Heart right ventricle (tissue), 16 donors: ENCODE measurements at regions of chr7 and their contacts with region 1.

Region 1: GRCh38 chr7:94810496-94810895 is 96.9 kb upstream of the PPP1R9A start:
- DNase-seq: no peak
- ATAC-seq: no peak
- H3K4me3 ChIP-seq: no peak overlapping the region
- H3K27ac ChIP-seq: no peak overlapping the region
- H3K4me1 ChIP-seq: no peaks in the 10 kb centered on the region
- H3K27me3 ChIP-seq: no peaks in the 10 kb centered on the region
- CTCF ChIP-seq: no peak

Region 2: DNA sequence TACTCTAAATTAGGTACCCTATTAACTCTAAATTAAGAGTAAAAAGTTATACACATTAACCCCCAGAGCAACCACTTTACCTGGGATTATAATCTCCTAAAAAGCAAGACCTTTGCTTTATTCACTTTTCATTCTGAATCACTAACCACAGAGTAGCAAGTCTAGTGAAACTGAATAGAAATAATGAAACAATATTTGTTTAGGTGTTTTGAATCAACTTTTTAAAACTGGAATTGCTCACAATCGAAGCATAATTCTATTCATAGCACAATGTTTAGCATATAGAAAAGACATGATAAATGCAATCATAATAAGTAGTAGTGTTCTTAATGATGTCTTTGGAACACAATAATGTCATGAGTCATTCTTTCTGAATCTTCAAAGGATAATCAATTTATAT is 337.9 kb before region 1 on chr7:
- intact Hi-C with region 1: loop called in 1 of 10 experiments (anchors 10 kb)
- DNase-seq: no peak
- ATAC-seq: no peak
- H3K4me3 ChIP-seq: no peak overlapping the region
- H3K27ac ChIP-seq: no peak overlapping the region
- H3K4me1 ChIP-seq: no peaks in the 10 kb centered on the region
- H3K27me3 ChIP-seq: peaks cover 0 to 4% (median 0%) of the 10 kb centered on the region in 7 donors
- CTCF ChIP-seq: no peak

Region 3: GRCh38 chr7:94761451-94761850 is 49.0 kb before region 1 on chr7:
- intact Hi-C with region 1: loop called in 1 of 10 experiments (anchors 1 kb)
- DNase-seq: no peak
- ATAC-seq: no peak
- H3K4me3 ChIP-seq: no peak overlapping the region
- H3K27ac ChIP-seq: no peak overlapping the region
- H3K4me1 ChIP-seq: no peaks in the 10 kb centered on the region
- H3K27me3 ChIP-seq: no peaks in the 10 kb centered on the region
- CTCF ChIP-seq: no peak

Region 4: DNA sequence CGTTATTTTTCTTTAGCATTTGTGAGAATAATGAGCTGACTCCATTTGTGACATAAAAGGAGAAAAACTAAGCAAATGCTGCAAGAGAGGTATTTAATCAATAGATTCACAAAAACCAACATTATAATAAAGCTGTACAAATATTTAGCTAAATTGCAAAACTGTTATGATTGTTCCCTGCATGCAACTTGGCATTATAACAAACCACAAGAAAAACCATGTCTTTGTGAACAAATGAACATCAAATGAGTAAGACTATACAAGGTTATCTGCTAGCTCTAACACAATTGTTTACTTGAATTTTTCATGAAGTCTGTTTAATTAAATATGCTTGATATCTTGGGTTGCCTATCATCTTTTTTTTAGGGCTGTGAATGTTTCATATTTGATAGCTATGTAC is 46.1 kb after region 1 on chr7:
- intact Hi-C with region 1: no loop called
- DNase-seq: no peak
- ATAC-seq: no peak
- H3K4me3 ChIP-seq: no peak overlapping the region
- H3K27ac ChIP-seq: no peak overlapping the region
- H3K4me1 ChIP-seq: no peaks in the 10 kb centered on the region
- H3K27me3 ChIP-seq: no peaks in the 10 kb centered on the region
- CTCF ChIP-seq: no peak

Region 5: GRCh38 chr7:94907026-94907810 is 96.7 kb after region 1 on chr7 and contains the start of gene PPP1R9A:
- intact Hi-C with region 1: no loop called
- DNase-seq: peak; percentile 37 to 45
- ATAC-seq: peak; percentile 63 to 91 (median 84)
- H3K4me3 ChIP-seq: peak within 1 kb of the TSS; percentile 11 to 70 (median 60)
- H3K27ac ChIP-seq: peak within 1 kb of the TSS; percentile 26 to 83 (median 72)
- H3K4me1 ChIP-seq: peaks cover 0 to 17% (median 10%) of the 10 kb centered on the region in 9 donors
- H3K27me3 ChIP-seq: peaks cover 0 to 41% (median 5%) of the 10 kb centered on the region in 7 donors
- CTCF ChIP-seq: peak in 8 of 9 donors; percentile 9 to 59 (median 32)
- total RNA-seq, gene PPP1R9A: 19.1 to 41.9 (median 33.3) TPM

Region 6: DNA sequence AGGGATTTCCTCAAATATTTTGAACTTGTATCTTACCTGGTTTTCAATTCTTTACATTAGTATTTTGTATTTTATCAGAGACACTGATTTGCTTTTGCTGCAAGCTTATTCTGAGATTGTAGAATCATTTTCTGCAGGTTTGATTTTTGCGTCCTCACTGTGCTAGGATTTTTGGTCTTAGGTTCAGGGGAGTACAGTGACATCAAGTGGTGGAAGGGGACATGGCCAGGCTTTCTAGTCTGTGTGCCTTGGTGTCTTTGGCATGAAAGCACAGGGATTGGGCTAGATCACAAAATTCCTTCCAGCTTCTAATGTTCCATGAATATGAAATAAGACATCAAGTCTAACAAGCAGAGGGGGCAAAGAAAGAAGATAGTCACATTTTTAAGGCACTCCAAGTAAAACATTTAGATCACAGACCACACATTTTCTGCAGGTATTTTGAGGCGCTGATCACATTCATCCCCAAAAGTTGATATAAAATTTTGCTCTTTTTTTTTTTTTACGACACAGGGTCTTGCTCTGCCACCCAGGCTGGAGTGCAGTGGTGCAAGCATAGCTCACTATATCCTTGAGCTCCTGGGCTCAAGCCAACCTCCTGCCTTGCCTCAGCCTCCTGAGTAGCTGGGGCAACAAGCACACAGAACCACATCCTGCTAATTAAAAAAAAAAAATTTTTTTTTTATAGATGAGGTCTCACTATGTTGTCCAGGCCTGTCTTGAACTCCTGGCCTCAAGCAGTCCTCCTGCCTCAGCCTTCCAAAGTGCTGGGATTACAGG is 389.5 kb after region 1 on chr7:
- intact Hi-C with region 1: no loop called
- DNase-seq: peak in 1 of 2 donors; percentile 15
- ATAC-seq: peak in 6 of 8 donors; percentile 61 to 83 (median 78)
- H3K4me3 ChIP-seq: no peak overlapping the region
- H3K27ac ChIP-seq: no peak overlapping the region
- H3K4me1 ChIP-seq: peaks cover 0 to 4% (median 0%) of the 10 kb centered on the region in 9 donors
- H3K27me3 ChIP-seq: no peaks in the 10 kb centered on the region
- CTCF ChIP-seq: peak; percentile 30 to 81 (median 67)